AG04450 (cell line): ENCODE measurements at regions of chr13 and their contacts with region 1.

Region 1: DNA sequence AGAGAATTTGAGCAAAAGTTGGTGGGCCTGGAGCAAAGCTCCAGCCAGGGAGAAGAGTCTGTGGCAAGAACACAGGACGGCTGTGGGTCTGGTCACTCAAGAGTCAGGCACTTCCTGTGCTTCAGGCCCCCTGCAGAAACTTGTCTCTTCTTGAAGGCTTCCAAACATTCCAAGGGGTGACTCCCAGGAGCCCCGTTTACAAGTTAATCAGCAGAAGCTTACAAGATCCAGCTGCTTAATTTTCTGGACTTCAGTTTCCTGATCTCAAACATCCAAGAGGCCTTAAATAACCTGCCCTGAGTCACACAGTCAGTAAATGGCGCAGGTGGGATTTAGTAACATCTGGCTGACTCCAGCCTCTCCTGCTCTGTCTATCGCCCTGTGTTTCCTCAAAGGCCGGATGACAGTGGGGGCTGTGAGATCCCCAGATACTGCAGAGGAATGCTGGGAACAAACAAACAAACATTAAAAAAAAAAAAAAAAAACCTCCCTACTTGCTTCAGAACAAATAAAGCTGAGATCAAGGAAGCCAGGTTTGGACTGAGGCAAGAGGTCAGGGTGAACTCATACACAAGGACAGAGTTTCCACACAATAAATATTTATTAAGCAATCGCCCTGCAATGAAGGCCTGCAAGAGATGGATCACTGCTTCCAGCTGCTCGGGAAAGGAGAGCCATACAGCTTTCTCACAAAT is 175.4 kb upstream of the RFC3 start:
- DNase-seq: peak; percentile 88
- H3K4me3 ChIP-seq: no peak overlapping the region
- H3K27ac ChIP-seq: peak overlapping the region; percentile 97
- H3K27me3 ChIP-seq: no peaks in the 10 kb centered on the region
- CTCF ChIP-seq: no peak

Region 2: DNA sequence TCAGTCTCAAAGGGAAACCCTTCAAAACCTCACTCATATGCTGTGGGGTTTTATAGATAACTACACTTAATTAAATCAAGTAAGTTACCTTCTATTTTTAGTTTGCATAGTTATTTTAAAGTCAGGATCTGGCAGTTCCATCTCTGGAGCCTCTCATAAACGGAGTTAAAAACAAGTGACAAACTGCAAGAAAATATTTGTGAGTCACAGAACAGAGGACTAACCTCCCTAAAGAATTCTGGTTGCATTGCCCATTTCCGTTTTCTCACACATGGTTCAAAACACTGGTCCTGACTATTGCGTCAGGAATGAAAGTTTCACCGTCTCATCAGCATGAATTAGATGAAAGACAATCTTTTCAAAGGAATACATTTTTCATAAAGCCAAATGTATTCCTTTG is 1892.6 kb before region 1 on chr13:
- CTCF ChIA-PET with region 1: no interaction called
- POLR2A ChIA-PET with region 1: interaction called, 10 read pairs
- DNase-seq: peak; percentile 72
- H3K4me3 ChIP-seq: no peak overlapping the region
- H3K27ac ChIP-seq: no peak overlapping the region
- H3K27me3 ChIP-seq: no peaks in the 10 kb centered on the region
- CTCF ChIP-seq: no peak

Region 3: DNA sequence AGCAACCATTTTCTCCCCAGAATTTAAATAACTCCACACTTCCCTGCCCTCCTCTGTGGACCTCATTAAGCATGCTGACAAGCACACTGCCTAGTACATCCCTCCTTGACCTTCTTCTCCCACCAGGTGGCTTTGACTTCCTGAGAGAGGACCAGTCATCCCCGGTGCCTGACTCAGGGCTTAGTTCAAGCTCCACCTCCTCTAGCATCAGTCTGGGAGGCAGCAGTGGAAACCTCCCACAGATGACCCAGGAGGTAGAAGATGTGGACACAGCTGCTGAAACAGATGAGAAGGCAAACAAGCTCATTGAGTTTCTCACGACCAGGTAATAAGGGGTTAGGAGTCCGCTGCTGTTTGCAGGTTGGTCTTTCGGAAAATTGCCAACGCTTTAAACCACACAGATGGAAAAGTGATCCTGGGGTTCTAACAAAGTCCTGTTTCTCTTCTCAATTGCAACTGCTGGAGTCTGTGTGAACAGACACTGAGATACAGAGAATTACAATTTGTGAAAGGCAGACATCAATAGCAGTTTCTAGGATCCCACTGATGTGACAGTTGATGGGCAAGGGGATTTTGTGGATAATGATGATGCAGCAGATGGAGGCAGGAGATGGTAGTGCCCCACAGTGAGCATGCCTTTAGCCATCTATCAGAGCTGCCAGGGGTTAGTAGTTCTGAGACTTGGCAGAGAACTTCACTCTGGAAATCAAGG is 1414.0 kb before region 1 on chr13:
- CTCF ChIA-PET with region 1: no interaction called
- POLR2A ChIA-PET with region 1: interaction called, 10 read pairs
- DNase-seq: peak; percentile 46
- H3K4me3 ChIP-seq: no peak overlapping the region
- H3K27ac ChIP-seq: peak overlapping the region; percentile 40
- H3K27me3 ChIP-seq: no peaks in the 10 kb centered on the region
- CTCF ChIP-seq: peak; percentile 14; the same call in 1 of the 2 replicates

Region 4: DNA sequence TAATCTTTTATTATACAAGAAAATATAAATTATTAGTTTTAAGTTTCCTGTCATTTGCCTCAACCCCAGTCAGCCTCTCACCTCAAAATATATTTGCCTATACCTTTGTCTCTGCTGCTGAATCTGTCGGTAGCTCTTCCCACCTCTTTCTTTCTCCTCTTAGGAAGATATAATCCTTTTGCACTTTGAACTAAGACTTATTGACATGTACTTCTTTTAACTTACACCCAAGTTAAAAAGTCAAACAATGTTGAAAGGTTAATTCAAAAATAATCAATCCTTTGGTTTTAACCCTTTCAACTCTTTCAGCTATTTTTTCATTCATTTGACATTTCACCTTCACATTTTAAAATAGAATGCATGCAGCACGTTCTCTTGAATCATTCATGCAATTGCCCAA is 635.3 kb before region 1 on chr13:
- CTCF ChIA-PET with region 1: no interaction called
- POLR2A ChIA-PET with region 1: interaction called, 15 read pairs
- DNase-seq: no peak
- H3K4me3 ChIP-seq: no peak overlapping the region
- H3K27ac ChIP-seq: no peak overlapping the region
- H3K27me3 ChIP-seq: peaks cover 11% of the 10 kb centered on the region
- CTCF ChIP-seq: no peak

Region 5: GRCh38 chr13:33542283-33543088 is 100.0 kb before region 1 on chr13:
- CTCF ChIA-PET with region 1: interaction called, 9 read pairs
- POLR2A ChIA-PET with region 1: interaction called, 23 read pairs
- DNase-seq: peak; percentile 99
- H3K4me3 ChIP-seq: peak overlapping the region; percentile 56
- H3K27ac ChIP-seq: peak overlapping the region; percentile 96
- H3K27me3 ChIP-seq: no peaks in the 10 kb centered on the region
- CTCF ChIP-seq: peak; percentile 85

Region 6: DNA sequence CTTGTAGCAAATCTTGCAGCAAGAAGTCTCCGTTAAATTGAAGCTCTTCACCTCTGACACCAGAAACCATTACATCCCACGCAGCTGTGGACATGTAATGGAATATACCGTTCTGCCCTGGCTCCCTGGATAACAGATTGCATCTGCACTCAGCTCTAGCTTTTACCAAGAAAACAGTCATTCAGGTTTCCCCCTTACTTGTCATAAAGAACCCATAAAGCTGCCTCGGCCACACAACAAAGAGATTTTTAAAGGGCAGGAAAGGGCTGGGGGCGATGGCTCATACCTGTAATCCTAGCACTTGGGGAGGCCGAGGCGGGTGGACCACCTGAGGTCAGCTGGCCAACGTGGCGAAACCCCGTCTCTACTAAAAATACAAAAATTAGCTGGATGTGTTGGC is 47.8 kb after region 1 on chr13:
- CTCF ChIA-PET with region 1: interaction called, 5 read pairs
- POLR2A ChIA-PET with region 1: interaction called, 10 read pairs
- DNase-seq: no peak
- H3K4me3 ChIP-seq: no peak overlapping the region
- H3K27ac ChIP-seq: no peak overlapping the region
- H3K27me3 ChIP-seq: peaks cover 7% of the 10 kb centered on the region
- CTCF ChIP-seq: no peak

Region 7: DNA sequence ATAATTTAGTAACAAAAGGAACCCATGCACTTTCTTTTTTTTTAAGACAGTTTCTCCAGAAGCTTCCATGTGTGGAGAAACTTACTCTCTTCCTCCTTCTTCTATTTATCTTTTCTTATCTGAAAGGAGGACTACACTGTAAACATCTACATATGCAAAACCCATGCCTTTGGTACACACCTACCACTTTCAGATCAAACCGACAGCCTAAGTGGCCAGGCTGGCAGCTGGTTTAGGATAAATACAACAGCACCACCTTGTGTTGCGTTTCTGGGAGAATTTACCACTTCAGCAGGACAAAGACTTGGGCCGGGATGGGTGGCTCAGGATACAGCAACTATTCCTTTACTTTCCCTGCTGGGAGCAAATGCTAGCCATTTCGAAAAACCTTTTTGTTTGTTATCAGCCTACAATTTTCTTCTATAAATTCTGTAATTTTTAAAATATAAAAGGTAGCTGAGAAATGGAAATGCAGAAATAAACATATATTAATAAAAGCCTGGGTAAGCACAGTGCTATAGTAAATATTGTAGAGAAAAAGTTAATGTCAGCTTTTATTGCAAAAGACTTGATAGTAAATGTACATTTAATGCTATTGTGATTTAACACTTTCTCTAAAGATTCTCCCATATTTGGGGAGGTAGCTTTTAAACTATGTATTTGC is 81.4 kb after region 1 on chr13:
- CTCF ChIA-PET with region 1: interaction called, 11 read pairs
- POLR2A ChIA-PET with region 1: interaction called, 4 read pairs
- DNase-seq: peak; percentile 69
- H3K4me3 ChIP-seq: no peak overlapping the region
- H3K27ac ChIP-seq: no peak overlapping the region
- H3K27me3 ChIP-seq: no peaks in the 10 kb centered on the region
- CTCF ChIP-seq: peak; percentile 76

Region 8: GRCh38 chr13:34310539-34310938 is 668.0 kb after region 1 on chr13:
- CTCF ChIA-PET with region 1: no interaction called
- POLR2A ChIA-PET with region 1: no interaction called
- DNase-seq: no peak
- H3K4me3 ChIP-seq: no peak overlapping the region
- H3K27ac ChIP-seq: no peak overlapping the region
- H3K27me3 ChIP-seq: no peaks in the 10 kb centered on the region
- CTCF ChIP-seq: no peak